GM12878 (cell line): ENCODE measurements at regions of chr22 and their contacts with region 1.

Region 1: GRCh38 chr22:26330966-26331625 is 98.0 kb upstream of the ASPHD2 start:
- DNase-seq: peak; percentile 7
- ATAC-seq: peak; percentile 91
- H3K4me3 ChIP-seq: no peak overlapping the region
- H3K27ac ChIP-seq: no peak overlapping the region
- H3K4me1 ChIP-seq: no peaks in the 10 kb centered on the region
- H3K27me3 ChIP-seq: no peaks in the 10 kb centered on the region
- CTCF ChIP-seq: peak; percentile 91 to 94 (median 93)
- EP300 ChIP-seq: no peak
- POLR2A ChIP-seq: no peak
- RAD21 ChIP-seq: peak; percentile 94

Region 2: GRCh38 chr22:25465949-25466348 is 865.1 kb before region 1 on chr22:
- CTCF ChIA-PET with region 1: interaction called, 3 read pairs
- POLR2A ChIA-PET with region 1: no interaction called
- RAD21 ChIA-PET with region 1: no interaction called
- SMC1A ChIA-PET with region 1: interaction called, 3 read pairs
- in situ Hi-C with region 1: no loop called
- intact Hi-C with region 1: loop called (anchors 5 kb)
- DNase-seq: no peak
- ATAC-seq: no peak
- H3K4me3 ChIP-seq: no peak overlapping the region
- H3K27ac ChIP-seq: no peak overlapping the region
- H3K4me1 ChIP-seq: no peaks in the 10 kb centered on the region
- H3K27me3 ChIP-seq: no peaks in the 10 kb centered on the region
- CTCF ChIP-seq: no peak
- EP300 ChIP-seq: no peak
- POLR2A ChIP-seq: no peak
- RAD21 ChIP-seq: no peak

Region 3: GRCh38 chr22:25772288-25772687 is 558.8 kb before region 1 on chr22:
- CTCF ChIA-PET with region 1: interaction called, 25 read pairs
- POLR2A ChIA-PET with region 1: no interaction called
- RAD21 ChIA-PET with region 1: interaction called, 5 read pairs
- SMC1A ChIA-PET with region 1: interaction called, 8 read pairs
- in situ Hi-C with region 1: no loop called
- intact Hi-C with region 1: loop called (anchors 1 kb)
- DNase-seq: no peak
- ATAC-seq: no peak; the same call in 2 of the 3 replicates
- H3K4me3 ChIP-seq: no peak overlapping the region
- H3K27ac ChIP-seq: no peak overlapping the region
- H3K4me1 ChIP-seq: 0 out of 2 replicates have a peak, but pooled peaks cover 3% of the 10 kb centered on the region
- H3K27me3 ChIP-seq: no peaks in the 10 kb centered on the region
- CTCF ChIP-seq: no peak
- EP300 ChIP-seq: no peak
- POLR2A ChIP-seq: no peak
- RAD21 ChIP-seq: no peak

Region 4: GRCh38 chr22:25777870-25778269 is 553.2 kb before region 1 on chr22:
- CTCF ChIA-PET with region 1: interaction called, 25 read pairs
- POLR2A ChIA-PET with region 1: no interaction called
- RAD21 ChIA-PET with region 1: interaction called, 5 read pairs
- SMC1A ChIA-PET with region 1: interaction called, 8 read pairs
- in situ Hi-C with region 1: loop called (anchors 5 kb)
- intact Hi-C with region 1: loop called (anchors 1 kb)
- DNase-seq: peak; percentile 11
- ATAC-seq: peak; percentile 70
- H3K4me3 ChIP-seq: no peak overlapping the region
- H3K27ac ChIP-seq: no peak overlapping the region
- H3K4me1 ChIP-seq: no peaks in the 10 kb centered on the region
- H3K27me3 ChIP-seq: no peaks in the 10 kb centered on the region
- CTCF ChIP-seq: peak; percentile 25 to 44 (median 44); a peak in 5 of 6 replicates
- EP300 ChIP-seq: no peak
- POLR2A ChIP-seq: no peak
- RAD21 ChIP-seq: peak; percentile 36; the same call in 1 of the 2 replicates

Region 5: GRCh38 chr22:25880524-25880923 is 450.6 kb before region 1 on chr22:
- CTCF ChIA-PET with region 1: interaction called, 6 read pairs
- POLR2A ChIA-PET with region 1: no interaction called
- RAD21 ChIA-PET with region 1: interaction called, 7 read pairs
- SMC1A ChIA-PET with region 1: interaction called, 3 read pairs
- in situ Hi-C with region 1: loop called (anchors 10 kb)
- intact Hi-C with region 1: loop called (anchors 5 kb)
- DNase-seq: peak; percentile 11
- ATAC-seq: peak; percentile 78
- H3K4me3 ChIP-seq: no peak overlapping the region
- H3K27ac ChIP-seq: no peak overlapping the region
- H3K4me1 ChIP-seq: no peaks in the 10 kb centered on the region
- H3K27me3 ChIP-seq: no peaks in the 10 kb centered on the region; a peak in 2 of 4 replicates
- CTCF ChIP-seq: peak; percentile 46 to 74 (median 60); a peak in 5 of 6 replicates
- EP300 ChIP-seq: no peak
- POLR2A ChIP-seq: no peak
- RAD21 ChIP-seq: peak; percentile 73

Region 6: GRCh38 chr22:25898689-25899365 is 432.3 kb before region 1 on chr22:
- CTCF ChIA-PET with region 1: interaction called, 18 read pairs
- POLR2A ChIA-PET with region 1: no interaction called
- RAD21 ChIA-PET with region 1: no interaction called
- SMC1A ChIA-PET with region 1: interaction called, 7 read pairs
- in situ Hi-C with region 1: loop called (anchors 5 kb)
- intact Hi-C with region 1: loop called (anchors 5 kb)
- DNase-seq: no peak
- ATAC-seq: no peak
- H3K4me3 ChIP-seq: no peak overlapping the region
- H3K27ac ChIP-seq: no peak overlapping the region
- H3K4me1 ChIP-seq: no peaks in the 10 kb centered on the region
- H3K27me3 ChIP-seq: no peaks in the 10 kb centered on the region; a peak in 1 of 4 replicates
- CTCF ChIP-seq: peak; percentile 29 to 45 (median 34); a peak in 3 of 6 replicates
- EP300 ChIP-seq: no peak
- POLR2A ChIP-seq: no peak
- RAD21 ChIP-seq: peak; percentile 25; the same call in 1 of the 2 replicates

Region 7: GRCh38 chr22:26172389-26172990 is 158.6 kb before region 1 on chr22:
- CTCF ChIA-PET with region 1: interaction called, 12 read pairs
- POLR2A ChIA-PET with region 1: no interaction called
- RAD21 ChIA-PET with region 1: interaction called, 8 read pairs
- SMC1A ChIA-PET with region 1: interaction called, 9 read pairs
- in situ Hi-C with region 1: no loop called
- intact Hi-C with region 1: loop called (anchors 10 kb)
- DNase-seq: no peak
- ATAC-seq: peak; percentile 85
- H3K4me3 ChIP-seq: no peak overlapping the region
- H3K27ac ChIP-seq: no peak overlapping the region
- H3K4me1 ChIP-seq: no peaks in the 10 kb centered on the region
- H3K27me3 ChIP-seq: peaks cover 5 to 11% of the 10 kb centered on the region in 2 experiments
- CTCF ChIP-seq: peak; percentile 70 to 77 (median 71)
- EP300 ChIP-seq: no peak
- POLR2A ChIP-seq: no peak
- RAD21 ChIP-seq: peak; percentile 56

Region 8: DNA sequence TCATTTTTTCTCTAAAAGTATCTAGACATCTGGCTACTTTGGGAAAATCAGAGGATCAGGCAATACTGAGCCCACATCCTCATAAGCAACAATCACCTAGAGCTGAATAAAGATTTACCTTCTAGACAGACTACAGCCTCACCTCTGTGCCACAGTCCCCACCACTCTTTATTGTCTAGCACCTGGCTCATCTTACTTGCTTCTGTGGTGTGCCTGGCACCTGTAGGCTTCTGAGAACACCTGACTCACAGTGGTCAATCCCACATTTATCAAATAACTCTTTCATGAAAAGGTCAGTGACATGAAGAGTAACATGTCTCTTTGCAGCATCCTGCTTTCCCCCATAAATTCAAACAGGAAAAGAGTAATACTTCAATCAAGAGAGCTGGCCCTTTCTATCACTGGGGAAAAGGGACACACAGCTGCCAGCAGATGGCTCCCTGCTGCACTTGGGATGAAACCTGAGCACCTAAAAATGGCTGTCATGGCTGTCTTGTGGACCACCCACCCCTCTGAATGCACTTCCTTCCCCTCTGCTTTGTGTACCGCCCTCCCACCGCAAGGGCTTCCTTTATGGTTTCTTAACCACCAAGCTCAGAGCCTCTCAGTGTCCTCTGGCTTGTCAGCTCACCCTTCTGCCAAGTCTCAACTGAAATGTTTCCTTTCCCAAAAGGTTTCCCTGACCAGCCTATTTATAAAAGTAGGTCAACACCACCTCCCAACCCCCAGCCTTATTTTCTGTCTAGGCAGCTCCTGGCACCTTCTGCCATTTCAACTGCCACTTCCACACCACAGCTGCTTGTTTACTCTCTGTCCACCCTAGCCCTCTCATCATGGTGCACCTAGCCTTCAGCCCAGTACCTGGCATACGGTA is 171.8 kb after region 1 on chr22:
- CTCF ChIA-PET with region 1: no interaction called
- POLR2A ChIA-PET with region 1: no interaction called
- RAD21 ChIA-PET with region 1: no interaction called
- SMC1A ChIA-PET with region 1: no interaction called
- in situ Hi-C with region 1: no loop called
- intact Hi-C with region 1: no loop called
- DNase-seq: no peak
- ATAC-seq: peak; percentile 90
- H3K4me3 ChIP-seq: no peak overlapping the region
- H3K27ac ChIP-seq: no peak overlapping the region
- H3K4me1 ChIP-seq: peaks cover 6% of the 10 kb centered on the region
- H3K27me3 ChIP-seq: no peaks in the 10 kb centered on the region
- CTCF ChIP-seq: peak; percentile 66 to 72 (median 68)
- EP300 ChIP-seq: no peak
- POLR2A ChIP-seq: no peak
- RAD21 ChIP-seq: peak; percentile 66